GM12878 (cell line): ENCODE measurements at regions of chr13 and their contacts with region 1.

Region 1: DNA sequence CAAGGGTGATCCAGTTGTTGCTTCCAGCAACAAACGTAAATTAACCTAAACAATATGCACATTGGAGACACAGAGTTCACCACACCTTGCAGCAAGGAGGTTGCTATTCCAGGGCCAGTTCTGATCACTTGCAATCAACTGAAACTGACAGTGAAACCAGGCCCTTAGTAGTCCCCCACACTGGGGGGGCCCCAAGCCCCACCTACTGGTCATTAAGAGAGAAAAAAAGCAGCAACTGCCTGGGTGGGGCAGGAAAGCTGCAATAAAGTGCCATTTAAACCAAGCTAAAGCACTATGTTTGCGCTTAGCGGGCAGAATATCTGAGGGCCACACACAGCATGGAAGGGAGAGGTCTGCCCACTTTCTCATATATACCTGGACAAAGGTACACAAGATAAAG is 51.5 kb downstream of the ATP7B start:
- DNase-seq: no peak
- ATAC-seq: peak; percentile 65
- H3K4me3 ChIP-seq: no peak overlapping the region
- H3K27ac ChIP-seq: no peak overlapping the region
- H3K4me1 ChIP-seq: peaks cover 17% of the 10 kb centered on the region
- H3K27me3 ChIP-seq: no peaks in the 10 kb centered on the region; a peak in 1 of 4 replicates
- CTCF ChIP-seq: peak; percentile 18 to 25 (median 22); a peak in 3 of 6 replicates
- EP300 ChIP-seq: no peak
- POLR2A ChIP-seq: no peak
- RAD21 ChIP-seq: 0 out of 2 replicates have a peak, but pooled peaks have one; percentile 24

Region 2: DNA sequence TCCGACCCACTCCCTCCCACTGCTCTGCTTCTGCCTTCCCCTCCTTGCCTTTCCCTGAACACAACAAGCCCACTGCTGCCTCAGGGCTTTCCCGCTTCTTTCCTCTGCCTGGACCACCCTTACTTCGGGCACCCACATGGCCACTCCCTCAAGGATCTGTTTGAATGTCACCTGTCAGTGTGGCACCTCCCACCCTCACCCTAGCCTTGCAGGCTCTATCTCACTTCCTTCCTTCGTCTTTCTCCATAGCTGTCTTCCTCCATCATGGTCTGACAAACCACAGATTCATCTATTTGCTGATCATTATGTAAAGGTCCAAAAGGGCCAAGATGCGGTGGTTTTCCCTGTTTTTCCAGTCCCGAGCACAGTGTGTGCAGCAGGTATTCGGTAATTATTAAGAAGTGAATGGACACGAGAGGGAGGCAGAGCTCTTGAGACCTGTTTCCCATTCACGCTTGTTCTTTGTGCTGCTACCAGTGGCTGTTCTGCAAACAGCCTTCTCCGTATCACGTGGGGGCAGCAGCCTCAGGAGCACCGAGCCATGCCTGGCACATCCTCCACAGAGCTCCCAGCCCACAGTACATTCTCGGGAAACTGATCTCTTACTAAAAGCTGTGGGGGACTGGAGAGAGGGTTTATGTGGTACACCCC is 47.8 kb before region 1 on chr13:
- CTCF ChIA-PET with region 1: interaction called, 5 read pairs
- POLR2A ChIA-PET with region 1: interaction called, 4 read pairs
- RAD21 ChIA-PET with region 1: interaction called, 10 read pairs
- SMC1A ChIA-PET with region 1: interaction called, 5 read pairs
- in situ Hi-C with region 1: no loop called
- intact Hi-C with region 1: no loop called
- DNase-seq: no peak
- ATAC-seq: peak; percentile 26
- H3K4me3 ChIP-seq: no peak overlapping the region
- H3K27ac ChIP-seq: no peak overlapping the region
- H3K4me1 ChIP-seq: peaks cover 6% of the 10 kb centered on the region; the same call in 1 of the 2 replicates
- H3K27me3 ChIP-seq: peaks cover 0 to 4% of the 10 kb centered on the region in 2 experiments; a peak in 2 of 4 replicates
- CTCF ChIP-seq: no peak; a peak in 1 of 6 replicates
- EP300 ChIP-seq: no peak
- POLR2A ChIP-seq: no peak
- RAD21 ChIP-seq: no peak

Region 3: DNA sequence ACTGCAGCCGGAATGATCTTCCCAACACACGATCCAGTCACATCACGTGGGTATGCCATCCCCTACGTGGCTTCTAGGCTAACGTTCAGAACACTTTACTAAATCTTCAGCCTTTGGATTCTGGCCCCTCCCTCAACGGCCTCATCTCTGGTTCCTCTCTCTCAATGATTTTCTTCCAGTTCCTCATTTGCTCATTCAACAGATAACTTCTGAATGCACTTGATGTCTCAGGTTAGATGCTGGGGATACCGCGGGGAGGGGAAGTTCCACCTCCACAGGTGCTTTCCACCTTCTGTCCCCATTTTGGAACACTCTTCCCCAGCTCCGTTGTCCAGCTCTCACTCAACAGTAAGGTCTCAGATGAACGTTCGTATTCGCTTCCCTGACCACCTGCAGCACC is 14.6 kb before region 1 on chr13:
- CTCF ChIA-PET with region 1: interaction called, 8 read pairs
- POLR2A ChIA-PET with region 1: interaction called, 6 read pairs
- RAD21 ChIA-PET with region 1: interaction called, 11 read pairs
- SMC1A ChIA-PET with region 1: interaction called, 8 read pairs
- in situ Hi-C with region 1: no loop called
- intact Hi-C with region 1: no loop called
- DNase-seq: no peak
- ATAC-seq: peak; percentile 90
- H3K4me3 ChIP-seq: no peak overlapping the region
- H3K27ac ChIP-seq: no peak overlapping the region
- H3K4me1 ChIP-seq: peaks cover 14% of the 10 kb centered on the region; the same call in 1 of the 2 replicates
- H3K27me3 ChIP-seq: no peaks in the 10 kb centered on the region; a peak in 1 of 4 replicates
- CTCF ChIP-seq: no peak
- EP300 ChIP-seq: no peak
- POLR2A ChIP-seq: no peak
- RAD21 ChIP-seq: no peak